HEK293T (cell line): ENCODE measurements at regions of chr6 and their contacts with region 1.

Region 1: GRCh38 chr6:85453490-85453889 is 3.6 kb downstream of the NT5E start:
- DNase-seq: no peak

Region 2: DNA sequence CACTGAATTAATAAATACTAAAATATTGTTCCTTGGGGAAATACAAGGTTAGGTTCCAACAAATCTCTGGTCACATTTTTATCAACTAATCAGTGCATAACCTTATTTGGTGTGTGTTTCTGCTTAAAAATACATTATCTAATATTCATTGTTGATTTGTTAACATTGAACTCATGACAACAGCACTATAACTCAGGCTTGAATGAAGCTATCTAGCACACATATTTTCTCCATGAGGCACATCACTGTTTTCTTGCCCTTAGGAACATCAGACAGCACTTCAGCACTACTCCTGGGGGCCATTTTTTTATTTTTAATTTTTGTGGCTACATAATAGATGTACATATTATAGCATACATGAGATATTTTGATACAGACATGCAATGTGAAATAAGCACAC is 280.8 kb before region 1 on chr6:
- CTCF ChIA-PET with region 1: no interaction called
- POLR2A ChIA-PET with region 1: no interaction called
- DNase-seq: no peak

Region 3: DNA sequence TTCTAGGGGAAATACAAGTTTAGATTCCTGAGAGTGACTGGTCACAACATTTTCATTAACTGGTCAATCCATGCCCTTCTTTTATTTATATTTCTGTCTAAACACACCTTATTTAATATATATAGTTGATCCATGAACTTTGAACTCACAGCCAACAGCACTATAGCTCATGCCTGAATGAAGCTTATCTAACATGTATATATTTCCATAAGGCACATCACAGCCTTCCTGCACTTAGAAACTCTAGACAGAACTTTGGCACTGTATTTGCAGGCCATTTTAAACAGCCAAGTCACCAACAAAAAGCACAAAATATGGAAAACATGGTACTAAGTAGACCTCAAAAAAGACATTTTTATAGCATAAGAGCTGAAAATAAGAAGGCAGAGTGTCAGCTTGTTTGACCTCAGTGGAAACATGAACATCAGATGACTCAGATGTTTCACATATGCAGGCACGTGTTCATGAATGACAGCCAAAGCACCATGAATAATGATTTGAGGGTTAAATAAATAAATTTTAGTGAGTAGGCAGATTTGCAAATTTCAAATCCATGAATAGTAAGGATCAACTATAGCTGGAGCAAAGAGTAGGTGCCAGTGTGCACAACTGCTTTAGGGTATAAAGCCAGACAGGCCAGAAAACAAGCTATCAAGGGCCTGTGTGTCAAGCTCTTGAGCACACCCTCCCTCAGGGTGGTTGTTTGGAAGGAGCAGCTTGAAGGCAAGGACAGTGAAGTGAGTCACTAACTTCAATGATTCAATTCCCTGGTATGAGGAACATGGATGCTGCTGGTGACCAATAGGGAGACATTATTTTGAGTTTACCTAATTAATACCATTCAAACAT is 92.5 kb before region 1 on chr6:
- CTCF ChIA-PET with region 1: no interaction called
- POLR2A ChIA-PET with region 1: no interaction called
- DNase-seq: no peak

Region 4: GRCh38 chr6:85416049-85416448 is 37.4 kb before region 1 on chr6:
- CTCF ChIA-PET with region 1: no interaction called
- POLR2A ChIA-PET with region 1: no interaction called
- DNase-seq: no peak

Region 5: GRCh38 chr6:85436411-85436810 is 17.1 kb before region 1 on chr6:
- CTCF ChIA-PET with region 1: interaction called, 10 read pairs
- POLR2A ChIA-PET with region 1: no interaction called
- DNase-seq: no peak